ENCODE measurements at regions of chr4 and their contacts with region 1.

Region 1: DNA sequence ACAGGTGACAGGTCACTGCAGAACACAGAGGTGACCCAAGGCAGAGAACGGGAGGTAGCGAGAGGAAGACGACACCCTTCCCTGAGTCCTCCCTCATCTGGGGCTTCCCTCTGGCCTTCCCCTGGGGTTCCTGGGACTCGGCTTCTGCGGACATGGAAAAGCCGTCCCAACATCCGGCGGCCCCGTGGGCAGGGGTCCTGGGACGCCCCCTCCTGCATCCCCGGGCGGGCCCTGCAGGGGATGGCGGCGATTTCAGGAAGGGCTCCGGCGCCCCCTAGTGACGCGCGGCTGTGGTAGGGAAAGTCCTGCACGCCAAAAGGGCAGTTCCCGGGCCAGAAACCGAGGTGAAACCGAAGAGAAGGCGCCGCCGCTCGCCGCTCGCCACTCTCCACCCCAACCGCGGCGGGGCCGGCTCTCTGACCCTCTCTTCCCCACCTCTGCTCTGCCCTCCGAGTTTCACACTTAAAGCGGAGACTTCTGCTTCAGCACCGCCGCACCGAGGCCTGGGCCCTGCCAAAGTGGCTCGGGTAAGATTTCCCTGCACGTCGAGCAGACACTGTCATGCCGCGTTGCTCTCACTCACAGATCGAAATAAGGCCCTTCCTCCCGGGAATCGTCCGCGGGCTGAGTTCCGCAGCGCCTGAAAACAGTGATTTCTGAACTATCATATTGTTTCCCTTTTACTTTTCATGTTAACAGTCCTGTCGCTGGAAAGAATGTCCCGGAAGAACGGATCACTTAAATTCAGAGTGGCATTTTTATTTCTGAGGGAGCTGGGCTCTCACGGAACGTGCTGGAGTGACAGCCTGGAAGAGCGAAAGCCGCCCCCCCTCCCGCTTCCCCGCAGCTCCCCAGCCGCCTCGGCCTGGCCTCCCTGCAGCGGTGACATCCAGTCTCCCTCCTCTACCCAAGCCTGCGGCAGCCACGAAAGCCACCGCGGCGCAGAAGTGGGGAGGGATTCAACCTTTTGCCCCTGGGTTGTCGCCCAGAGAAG is 110.6 kb downstream of the DCTD start:
- DNase-seq: peak; percentile 67 to 84
- H3K4me3 ChIP-seq: peak overlapping the region; percentile 42
- H3K4me3 Mint-ChIP-seq: peak overlapping the region; percentile 77
- H3K27ac Mint-ChIP-seq: peak overlapping the region; percentile 31
- H3K4me1 ChIP-seq: no peaks in the 10 kb centered on the region
- H3K4me1 Mint-ChIP-seq: no peaks in the 10 kb centered on the region
- H3K27me3 ChIP-seq: no peaks in the 10 kb centered on the region
- H3K27me3 Mint-ChIP-seq: no peaks in the 10 kb centered on the region
- CTCF ChIP-seq: peak; percentile 87 to 96

Region 2: GRCh38 chr4:181569553-181569952 is 1237.0 kb before region 1 on chr4:
- CTCF ChIA-PET with region 1: no interaction called
- POLR2A ChIA-PET with region 1: no interaction called
- intact Hi-C with region 1: loop called (anchors 5 kb)
- DNase-seq: peak in 1 of 2 experiments; percentile 4
- H3K4me3 ChIP-seq: no peak overlapping the region
- H3K4me3 Mint-ChIP-seq: no peak overlapping the region
- H3K27ac Mint-ChIP-seq: no peak overlapping the region
- H3K4me1 ChIP-seq: no peaks in the 10 kb centered on the region
- H3K4me1 Mint-ChIP-seq: no peaks in the 10 kb centered on the region
- H3K27me3 ChIP-seq: no peaks in the 10 kb centered on the region
- H3K27me3 Mint-ChIP-seq: peaks cover 11% of the 10 kb centered on the region
- CTCF ChIP-seq: peak in 1 of 2 experiments; percentile 48

Region 3: GRCh38 chr4:182478475-182478874 is 328.1 kb before region 1 on chr4:
- CTCF ChIA-PET with region 1: no interaction called
- POLR2A ChIA-PET with region 1: no interaction called
- intact Hi-C with region 1: loop called (anchors 1 kb)
- DNase-seq: peak in 1 of 2 experiments; percentile 30
- H3K4me3 ChIP-seq: no peak overlapping the region
- H3K4me3 Mint-ChIP-seq: no peak overlapping the region
- H3K27ac Mint-ChIP-seq: no peak overlapping the region
- H3K4me1 ChIP-seq: no peaks in the 10 kb centered on the region
- H3K4me1 Mint-ChIP-seq: no peaks in the 10 kb centered on the region
- H3K27me3 ChIP-seq: no peaks in the 10 kb centered on the region
- H3K27me3 Mint-ChIP-seq: no peaks in the 10 kb centered on the region
- CTCF ChIP-seq: peak; percentile 46 to 67

Region 4: GRCh38 chr4:182642831-182643230 is 163.7 kb before region 1 on chr4:
- CTCF ChIA-PET with region 1: no interaction called
- POLR2A ChIA-PET with region 1: no interaction called
- intact Hi-C with region 1: loop called (anchors 5 kb)
- DNase-seq: no peak
- H3K4me3 ChIP-seq: no peak overlapping the region
- H3K4me3 Mint-ChIP-seq: no peak overlapping the region
- H3K27ac Mint-ChIP-seq: no peak overlapping the region
- H3K4me1 ChIP-seq: no peaks in the 10 kb centered on the region
- H3K4me1 Mint-ChIP-seq: no peaks in the 10 kb centered on the region
- H3K27me3 ChIP-seq: no peaks in the 10 kb centered on the region
- H3K27me3 Mint-ChIP-seq: no peaks in the 10 kb centered on the region
- CTCF ChIP-seq: no peak

Region 5: DNA sequence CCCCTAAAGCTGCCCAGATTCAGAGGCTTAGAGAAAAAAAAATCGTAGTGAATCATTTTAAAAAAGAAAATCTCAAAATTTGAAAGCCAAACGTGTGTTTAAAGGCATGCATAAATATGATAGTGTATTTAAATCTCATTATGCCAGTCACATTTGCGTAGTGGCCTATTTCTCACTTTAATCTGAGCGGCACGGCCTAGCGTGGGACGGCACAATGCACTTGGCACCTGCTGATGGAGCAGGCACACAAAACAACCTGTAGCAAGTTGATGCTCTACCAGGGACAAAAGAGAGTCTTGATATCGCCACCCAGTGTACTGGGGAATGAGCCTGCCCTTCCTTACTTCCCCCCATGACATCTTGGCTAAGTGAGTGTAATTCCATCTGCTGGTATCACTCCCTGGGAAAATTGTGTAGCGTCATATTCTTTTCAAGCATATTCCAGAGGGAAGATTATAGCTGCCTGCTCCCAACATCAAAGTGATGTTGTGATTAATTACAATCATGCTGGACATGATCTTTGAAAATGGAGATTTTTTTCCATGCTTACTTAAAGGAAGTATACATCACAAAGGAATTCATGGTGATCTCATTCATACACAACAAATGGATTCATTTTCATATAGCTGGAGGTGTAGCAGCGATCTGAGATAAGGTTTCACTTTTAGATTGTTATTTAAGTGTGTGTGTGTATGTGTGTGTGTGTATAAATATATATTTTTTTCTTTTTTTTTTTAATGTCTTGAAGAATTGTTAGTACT is 28.2 kb before region 1 on chr4:
- CTCF ChIA-PET with region 1: no interaction called
- POLR2A ChIA-PET with region 1: no interaction called
- intact Hi-C with region 1: no loop called
- DNase-seq: no peak
- H3K4me3 ChIP-seq: no peak overlapping the region
- H3K4me3 Mint-ChIP-seq: no peak overlapping the region
- H3K27ac Mint-ChIP-seq: no peak overlapping the region
- H3K4me1 ChIP-seq: no peaks in the 10 kb centered on the region
- H3K4me1 Mint-ChIP-seq: no peaks in the 10 kb centered on the region
- H3K27me3 ChIP-seq: no peaks in the 10 kb centered on the region
- H3K27me3 Mint-ChIP-seq: no peaks in the 10 kb centered on the region
- CTCF ChIP-seq: no peak

Region 6: DNA sequence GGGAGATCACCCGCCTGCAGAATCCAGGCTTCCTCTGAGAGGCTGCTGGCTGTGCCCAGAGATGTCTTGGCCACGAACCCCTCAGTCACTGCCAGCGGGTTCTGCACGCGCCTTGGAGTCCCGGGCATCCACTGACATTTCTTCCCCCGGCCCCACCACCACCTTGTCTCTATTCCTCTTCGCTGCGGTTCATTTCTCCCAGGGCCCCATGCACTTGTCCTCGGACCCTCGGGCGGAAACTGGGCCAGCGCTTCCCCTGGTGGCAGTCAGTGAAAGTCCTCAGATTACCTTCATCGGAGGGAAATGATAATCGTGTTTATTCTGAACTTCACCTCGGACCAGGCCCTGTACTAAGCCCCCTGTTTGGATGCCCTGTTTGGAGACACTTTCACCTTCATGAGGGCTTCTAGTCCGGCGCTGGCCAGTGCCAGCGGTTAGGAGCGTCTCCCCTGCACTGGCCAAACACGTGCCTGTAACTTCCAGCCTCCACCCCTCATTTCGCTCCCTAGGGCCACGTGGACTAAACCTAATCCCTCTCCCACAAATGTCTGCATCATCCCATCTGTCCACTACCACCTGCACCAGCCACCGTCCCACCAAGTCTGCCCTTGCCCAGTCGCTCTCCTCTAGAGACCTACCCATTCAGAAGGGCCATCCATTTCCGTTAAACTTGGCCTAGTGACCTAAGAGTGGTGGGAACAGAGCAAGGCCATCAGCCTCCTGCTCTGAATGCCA is 28.6 kb after region 1 on chr4:
- CTCF ChIA-PET with region 1: no interaction called
- POLR2A ChIA-PET with region 1: no interaction called
- intact Hi-C with region 1: no loop called
- DNase-seq: peak in 1 of 2 experiments; percentile 16
- H3K4me3 ChIP-seq: no peak overlapping the region
- H3K4me3 Mint-ChIP-seq: no peak overlapping the region
- H3K27ac Mint-ChIP-seq: no peak overlapping the region
- H3K4me1 ChIP-seq: no peaks in the 10 kb centered on the region
- H3K4me1 Mint-ChIP-seq: no peaks in the 10 kb centered on the region
- H3K27me3 ChIP-seq: no peaks in the 10 kb centered on the region
- H3K27me3 Mint-ChIP-seq: peaks cover 3% of the 10 kb centered on the region
- CTCF ChIP-seq: no peak